Right cardiac atrium (tissue), 5 donors: ENCODE measurements at regions of chr13 and their contacts with region 1.

Region 1: GRCh38 chr13:77065461-77066147 is 38.6 kb upstream of the FBXL3 start:
- DNase-seq: no peak
- ATAC-seq: no peak
- H3K4me3 ChIP-seq: no peak overlapping the region
- H3K27ac ChIP-seq: no peak overlapping the region
- H3K4me1 ChIP-seq: no peaks in the 10 kb centered on the region
- H3K27me3 ChIP-seq: no peaks in the 10 kb centered on the region

Region 2: GRCh38 chr13:77184455-77184854 is 118.9 kb after region 1 on chr13:
- intact Hi-C with region 1: loop called in 1 of 4 experiments (anchors 10 kb)
- DNase-seq: no peak
- ATAC-seq: no peak
- H3K4me3 ChIP-seq: no peak overlapping the region
- H3K27ac ChIP-seq: no peak overlapping the region
- H3K4me1 ChIP-seq: no peaks in the 10 kb centered on the region
- H3K27me3 ChIP-seq: no peaks in the 10 kb centered on the region

Region 3: GRCh38 chr13:77262198-77262597 is 196.6 kb after region 1 on chr13:
- intact Hi-C with region 1: no loop called
- DNase-seq: no peak
- ATAC-seq: no peak
- H3K4me3 ChIP-seq: no peak overlapping the region
- H3K27ac ChIP-seq: no peak overlapping the region
- H3K4me1 ChIP-seq: no peaks in the 10 kb centered on the region
- H3K27me3 ChIP-seq: no peaks in the 10 kb centered on the region